ENCODE measurements at regions of chr13 and their contacts with region 1.

Region 1: GRCh38 chr13:35157143-35157755 is 215.2 kb downstream of the NBEA start:
- DNase-seq: peak; percentile 29
- H3K4me3 ChIP-seq: no peak overlapping the region
- H3K27ac ChIP-seq: no peak overlapping the region
- H3K4me1 ChIP-seq: no peaks in the 10 kb centered on the region
- H3K27me3 ChIP-seq: no peaks in the 10 kb centered on the region
- CTCF ChIP-seq: peak; percentile 29 to 76 (median 66)
- POLR2A ChIP-seq: no peak

Region 2: GRCh38 chr13:33799950-33800592 is 1357.2 kb before region 1 on chr13:
- intact Hi-C with region 1: loop called (anchors 10 kb)
- DNase-seq: no peak
- H3K4me3 ChIP-seq: no peak overlapping the region
- H3K27ac ChIP-seq: no peak overlapping the region
- H3K4me1 ChIP-seq: no peaks in the 10 kb centered on the region
- H3K27me3 ChIP-seq: no peaks in the 10 kb centered on the region
- CTCF ChIP-seq: peak in 3 of 4 experiments; percentile 25 to 41 (median 32)
- POLR2A ChIP-seq: no peak

Region 3: DNA sequence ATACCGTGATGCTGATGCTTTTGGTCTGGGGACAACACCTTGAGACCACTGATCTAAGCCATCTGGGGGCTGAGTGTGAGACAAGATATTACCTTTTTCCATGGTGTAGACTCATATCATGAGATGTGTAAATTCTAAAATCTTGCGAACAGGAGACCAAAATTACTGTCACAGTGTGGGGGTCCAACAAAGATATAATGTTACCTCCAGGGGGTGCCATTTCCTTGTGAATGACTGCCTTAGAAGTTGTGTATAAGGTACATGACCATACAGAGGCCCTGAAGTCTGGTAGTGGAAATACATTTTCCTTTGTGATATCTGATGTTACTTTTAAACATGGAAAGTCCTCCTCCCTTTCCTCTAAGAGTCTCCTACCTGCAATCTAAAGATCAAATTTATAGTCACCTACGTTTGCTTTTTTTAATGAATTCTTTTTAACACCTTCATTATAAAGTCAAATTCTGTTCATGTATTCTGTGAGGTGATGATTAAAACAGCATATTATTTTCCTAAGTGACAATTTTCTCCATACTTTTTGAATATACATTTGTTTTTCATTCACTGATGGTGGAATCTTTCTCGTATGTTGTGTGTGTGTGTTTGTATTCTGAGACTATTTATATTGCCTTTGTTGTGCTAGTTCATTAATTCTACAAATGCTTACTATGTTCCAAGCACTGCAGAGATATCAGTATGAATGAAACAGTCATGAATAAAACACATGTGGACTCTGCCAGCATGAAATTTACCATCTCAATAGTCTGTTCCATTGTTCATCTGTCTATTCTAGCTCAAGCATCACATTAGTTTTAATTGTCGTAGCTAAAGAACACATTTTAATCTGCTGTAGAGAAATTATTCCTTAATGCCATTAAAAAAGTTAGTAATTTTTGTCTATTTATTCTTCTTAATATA is 1225.6 kb before region 1 on chr13:
- intact Hi-C with region 1: loop called (anchors 2 kb)
- DNase-seq: peak; percentile 37
- H3K4me3 ChIP-seq: no peak overlapping the region
- H3K27ac ChIP-seq: no peak overlapping the region
- H3K4me1 ChIP-seq: no peaks in the 10 kb centered on the region
- H3K27me3 ChIP-seq: no peaks in the 10 kb centered on the region
- CTCF ChIP-seq: peak; percentile 24 to 66 (median 61)
- POLR2A ChIP-seq: no peak